Heart right ventricle (tissue), 16 donors: ENCODE measurements at regions of chr17 and their contacts with region 1.

Region 1: GRCh38 chr17:11557727-11558452 is 40.4 kb upstream of the DNAH9 start:
- DNase-seq: no peak
- ATAC-seq: no peak
- H3K4me3 ChIP-seq: no peak overlapping the region
- H3K27ac ChIP-seq: no peak overlapping the region
- H3K4me1 ChIP-seq: no peaks in the 10 kb centered on the region
- H3K27me3 ChIP-seq: peaks cover 0 to 8% (median 0%) of the 10 kb centered on the region in 7 donors
- CTCF ChIP-seq: no peak

Region 2: GRCh38 chr17:11454096-11454495 is 103.8 kb before region 1 on chr17:
- intact Hi-C with region 1: no loop called
- DNase-seq: no peak
- ATAC-seq: no peak
- H3K4me3 ChIP-seq: no peak overlapping the region
- H3K27ac ChIP-seq: no peak overlapping the region
- H3K4me1 ChIP-seq: no peaks in the 10 kb centered on the region
- H3K27me3 ChIP-seq: peaks cover 0 to 20% (median 0%) of the 10 kb centered on the region in 7 donors
- CTCF ChIP-seq: no peak

Region 3: DNA sequence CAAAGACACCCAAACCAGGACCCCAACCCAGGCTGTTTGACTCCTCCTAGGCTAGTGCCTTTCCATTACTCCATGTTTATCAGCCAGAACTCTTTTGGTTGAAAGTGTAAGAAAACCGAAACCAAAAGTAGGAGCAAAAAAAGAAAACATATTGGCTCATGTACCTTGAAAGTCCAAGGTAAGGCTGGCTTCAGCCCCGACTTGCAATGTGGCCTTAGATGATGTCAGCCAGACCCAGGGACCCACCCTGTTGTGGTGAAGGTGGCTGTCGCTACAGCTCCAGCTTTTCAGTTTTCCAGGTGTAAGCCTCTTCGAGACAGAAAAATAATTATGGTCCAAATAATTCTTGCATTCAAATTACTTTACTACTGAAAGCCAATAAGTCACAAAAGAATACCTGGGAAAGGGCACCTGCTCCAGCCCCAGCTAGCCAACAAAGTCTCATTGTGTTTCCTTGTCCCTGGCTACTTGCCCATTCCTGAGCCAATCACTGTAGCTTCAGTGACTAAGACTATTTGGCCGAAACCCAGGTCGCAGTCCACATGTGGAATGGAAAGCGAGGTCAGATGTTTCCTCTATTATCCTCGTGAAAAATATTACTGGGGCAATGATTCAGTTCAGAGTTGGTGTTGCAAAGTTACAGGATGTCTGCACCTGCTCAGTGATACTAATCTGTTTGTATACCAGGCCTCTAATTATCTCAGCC is 61.1 kb after region 1 on chr17:
- intact Hi-C with region 1: loop called in 2 of 10 experiments (anchors 10 kb)
- DNase-seq: peak in 1 of 2 donors; percentile 47
- ATAC-seq: peak in 5 of 8 donors; percentile 19 to 65 (median 49)
- H3K4me3 ChIP-seq: no peak overlapping the region
- H3K27ac ChIP-seq: no peak overlapping the region
- H3K4me1 ChIP-seq: peaks cover 0 to 5% (median 0%) of the 10 kb centered on the region in 9 donors
- H3K27me3 ChIP-seq: peaks cover 0 to 10% (median 3%) of the 10 kb centered on the region in 7 donors
- CTCF ChIP-seq: no peak